T-cell (primary cell): ENCODE measurements at regions of chr19 and their contacts with region 1.

Region 1: DNA sequence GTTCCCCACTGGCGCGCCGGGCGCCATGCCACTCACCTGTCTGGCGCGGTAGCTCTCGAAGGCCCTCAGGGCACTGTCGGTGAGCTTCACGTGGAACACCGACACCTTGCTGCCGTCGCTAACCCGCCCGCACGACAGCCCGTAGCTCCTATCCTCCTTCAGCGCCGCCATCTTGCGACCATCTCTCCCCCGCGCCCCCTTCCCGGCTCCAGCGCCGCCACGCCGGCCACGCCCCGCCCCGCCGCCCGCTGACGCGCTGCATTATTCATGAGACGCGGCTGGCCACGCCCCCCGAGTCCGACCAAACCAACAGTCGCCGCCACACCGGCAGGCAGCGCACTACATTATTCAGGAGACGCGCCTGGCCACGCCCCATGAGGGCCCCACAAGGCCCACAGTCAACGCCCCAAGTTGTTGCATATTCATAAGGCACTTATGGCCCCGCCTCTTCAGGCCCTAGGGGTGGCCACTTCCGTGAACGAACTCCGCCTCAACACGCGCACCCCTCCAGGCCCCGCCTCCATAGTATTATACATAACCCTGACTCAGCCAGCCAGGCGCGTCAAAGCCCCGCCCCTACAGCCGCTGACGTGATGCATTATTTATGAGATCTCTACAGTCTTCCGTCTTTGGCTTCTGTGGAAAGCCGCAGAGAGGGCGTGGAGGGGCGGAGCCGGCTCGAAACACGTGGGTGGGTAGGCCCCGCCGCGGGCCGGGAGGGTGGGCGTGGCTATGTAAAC is at the start of gene ELL:
- DNase-seq: peak; percentile 100
- ATAC-seq: peak; percentile 86 to 89 (median 88)
- H3K4me3 ChIP-seq: peak within 1 kb of the TSS; percentile 65 to 87
- H3K4me3 Mint-ChIP-seq: peak within 1 kb of the TSS; percentile 91 to 99 (median 95)
- H3K27ac ChIP-seq: peak within 1 kb of the TSS; percentile 89
- H3K27ac Mint-ChIP-seq: peak within 1 kb of the TSS; percentile 93 to 96
- H3K4me1 ChIP-seq: peaks cover 6 to 46% of the 10 kb centered on the region in 2 experiments
- H3K4me1 Mint-ChIP-seq: peaks cover 15 to 31% (median 25%) of the 10 kb centered on the region in 3 donors
- H3K27me3 ChIP-seq: no peaks in the 10 kb centered on the region
- H3K27me3 Mint-ChIP-seq: no peaks in the 10 kb centered on the region
- total RNA-seq, gene ELL: 27.2 to 46.4 (median 33.4) TPM

Region 2: DNA sequence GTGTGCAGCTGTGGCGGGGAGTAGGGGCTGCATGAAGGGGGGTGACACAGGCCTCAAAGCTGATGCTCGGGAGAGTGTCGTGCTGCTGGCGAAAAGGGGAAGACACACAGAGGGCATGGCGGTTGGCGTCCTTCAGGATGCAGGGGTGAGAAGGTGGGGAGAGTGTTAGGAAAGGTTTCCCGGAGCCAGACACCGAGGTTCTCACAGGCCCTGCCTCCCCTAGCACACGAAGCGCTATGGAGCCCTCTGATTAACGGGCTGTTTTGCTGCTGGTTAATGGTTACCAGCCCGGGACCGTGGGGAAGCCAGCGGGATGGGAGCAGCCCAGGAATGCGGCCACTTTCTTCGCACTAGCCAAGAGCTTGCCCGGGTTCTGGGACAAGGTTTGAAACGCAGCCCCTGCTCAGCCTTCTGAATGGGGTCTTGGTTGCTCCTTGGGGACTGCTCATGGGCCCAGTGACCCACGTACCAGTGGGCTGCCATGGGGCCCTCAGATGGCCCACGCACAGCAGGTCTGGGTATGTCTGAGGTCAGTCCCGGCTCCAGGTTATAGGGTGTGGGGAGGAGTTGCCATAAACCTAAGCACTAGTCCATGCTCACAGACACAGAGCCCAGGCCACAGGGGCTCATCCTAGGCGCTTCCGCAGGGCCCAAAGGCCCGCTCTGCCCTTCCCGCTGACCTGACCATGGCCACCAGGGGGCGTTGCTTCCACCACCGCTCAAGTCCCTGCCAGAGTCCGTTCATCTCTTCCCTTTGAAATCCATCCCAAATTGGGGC is 52.8 kb before region 1 on chr19:
- CTCF ChIA-PET with region 1: interaction called, 4 to 12 read pairs
- POLR2A ChIA-PET with region 1: no interaction called
- DNase-seq: peak in 30 of 35 experiments; percentile 29 to 80 (median 52)
- ATAC-seq: peak; percentile 52 to 55 (median 53)
- H3K4me3 ChIP-seq: no peak overlapping the region
- H3K4me3 Mint-ChIP-seq: no peak overlapping the region
- H3K27ac ChIP-seq: no peak overlapping the region
- H3K27ac Mint-ChIP-seq: no peak overlapping the region
- H3K4me1 ChIP-seq: peaks cover 0 to 46% of the 10 kb centered on the region in 2 experiments
- H3K4me1 Mint-ChIP-seq: peaks cover 4 to 35% (median 16%) of the 10 kb centered on the region in 3 donors
- H3K27me3 ChIP-seq: no peaks in the 10 kb centered on the region
- H3K27me3 Mint-ChIP-seq: no peaks in the 10 kb centered on the region

Region 3: DNA sequence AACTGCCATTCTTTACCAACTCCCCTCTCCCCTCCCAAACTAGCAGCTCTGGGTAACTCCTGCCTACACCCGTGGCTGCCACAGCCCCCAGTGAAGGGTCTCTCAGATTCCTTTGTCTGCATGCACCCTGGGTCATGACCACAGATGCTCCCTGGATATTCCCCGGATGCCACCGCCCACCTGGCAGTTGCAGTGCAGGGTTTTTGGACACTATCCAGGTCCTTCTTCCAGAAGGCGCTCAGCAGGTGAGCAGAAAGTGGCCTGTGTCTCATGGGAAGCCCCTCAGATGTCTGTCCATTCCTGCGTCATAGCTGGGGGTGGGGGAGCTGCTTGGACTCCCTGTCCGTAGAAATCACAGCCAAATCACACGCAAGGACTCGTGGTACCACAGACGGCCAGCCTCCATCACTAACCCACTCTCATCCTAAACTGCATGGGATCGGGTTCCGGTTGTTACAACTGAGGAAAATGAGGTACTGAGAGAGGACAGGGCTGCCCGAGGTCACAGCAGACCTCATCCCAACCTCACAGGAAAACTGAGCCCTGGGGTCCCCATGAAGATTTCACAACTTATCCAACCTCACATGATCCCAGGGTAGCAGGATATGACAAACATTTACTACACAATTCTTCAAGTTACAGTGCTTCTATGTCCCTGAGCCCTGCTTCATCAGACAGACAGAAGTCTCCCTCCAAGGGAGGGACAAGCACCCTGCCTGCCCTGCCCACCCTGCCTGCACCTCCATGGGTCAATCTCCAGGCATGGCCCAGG is 38.8 kb before region 1 on chr19:
- CTCF ChIA-PET with region 1: no interaction called
- POLR2A ChIA-PET with region 1: no interaction called
- DNase-seq: no peak
- ATAC-seq: no peak
- H3K4me3 ChIP-seq: no peak overlapping the region
- H3K4me3 Mint-ChIP-seq: no peak overlapping the region
- H3K27ac ChIP-seq: no peak overlapping the region
- H3K27ac Mint-ChIP-seq: peak overlapping the region in 1 of 2 donors; percentile 63
- H3K4me1 ChIP-seq: peaks cover 0 to 80% of the 10 kb centered on the region in 2 experiments
- H3K4me1 Mint-ChIP-seq: peaks cover 59 to 95% (median 83%) of the 10 kb centered on the region in 3 donors
- H3K27me3 ChIP-seq: no peaks in the 10 kb centered on the region
- H3K27me3 Mint-ChIP-seq: no peaks in the 10 kb centered on the region

Region 4: GRCh38 chr19:18496167-18496979 is 25.7 kb before region 1 on chr19:
- CTCF ChIA-PET with region 1: interaction called, 7 to 23 read pairs
- POLR2A ChIA-PET with region 1: interaction called in 1 of 2 experiments, 3 read pairs
- DNase-seq: peak in 34 of 35 experiments; percentile 38 to 88 (median 60)
- ATAC-seq: peak; percentile 90 to 95 (median 92)
- H3K4me3 ChIP-seq: peak overlapping the region; percentile 26 to 27
- H3K4me3 Mint-ChIP-seq: peak overlapping the region; percentile 63 to 76 (median 65)
- H3K27ac ChIP-seq: peak overlapping the region; percentile 98
- H3K27ac Mint-ChIP-seq: peak overlapping the region; percentile 71 to 81
- H3K4me1 ChIP-seq: peaks cover 16 to 98% of the 10 kb centered on the region in 2 experiments
- H3K4me1 Mint-ChIP-seq: peaks cover 62 to 88% (median 85%) of the 10 kb centered on the region in 3 donors
- H3K27me3 ChIP-seq: no peaks in the 10 kb centered on the region
- H3K27me3 Mint-ChIP-seq: no peaks in the 10 kb centered on the region

Region 5: DNA sequence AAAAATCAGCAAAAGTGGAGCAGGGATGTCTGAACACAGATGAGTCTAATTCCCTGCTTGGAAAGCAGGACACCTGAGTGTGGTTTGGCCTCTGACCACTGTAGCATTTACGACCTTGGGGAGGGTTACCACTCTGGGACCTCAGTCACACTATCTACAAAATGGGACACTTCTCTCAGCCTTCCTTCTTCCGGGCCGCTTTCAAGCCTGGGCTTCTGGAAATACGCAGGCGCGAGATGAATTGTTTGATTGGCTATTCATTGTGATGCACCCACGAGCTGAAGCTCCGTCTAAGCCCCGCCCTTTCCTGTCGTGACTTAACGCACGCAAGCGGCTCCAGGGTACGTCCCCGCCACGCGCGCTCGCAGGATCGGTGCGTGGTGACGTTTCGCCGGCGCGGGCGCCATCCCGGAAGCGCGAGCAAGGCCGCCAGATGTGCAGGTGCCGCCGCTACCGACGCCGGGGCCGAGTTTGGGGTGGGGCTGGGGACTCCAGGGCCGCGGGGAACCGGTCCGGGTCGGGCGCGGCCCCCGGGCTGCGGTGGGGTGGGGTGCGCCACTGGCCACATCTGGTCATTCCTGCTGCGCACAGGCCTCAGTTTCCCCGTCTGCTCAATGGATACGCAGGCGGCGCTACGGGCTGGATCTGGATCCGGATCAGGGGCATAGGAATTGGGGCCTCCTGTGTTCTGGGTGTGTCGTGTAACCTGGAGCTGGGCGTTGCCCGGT is 35.6 kb after region 1 on chr19 and contains the start of gene KXD1:
- CTCF ChIA-PET with region 1: interaction called in 1 of 2 experiments, 11 read pairs
- POLR2A ChIA-PET with region 1: interaction called, 6 to 8 read pairs
- DNase-seq: peak; percentile 88 to 100 (median 98)
- ATAC-seq: peak; percentile 99 to 100 (median 100)
- H3K4me3 ChIP-seq: peak within 1 kb of the TSS; percentile 80 to 85
- H3K4me3 Mint-ChIP-seq: peak within 1 kb of the TSS; percentile 87 to 90 (median 87)
- H3K27ac ChIP-seq: peak within 1 kb of the TSS; percentile 90
- H3K27ac Mint-ChIP-seq: peak within 1 kb of the TSS; percentile 90 to 92
- H3K4me1 ChIP-seq: peaks cover 14 to 27% of the 10 kb centered on the region in 2 experiments
- H3K4me1 Mint-ChIP-seq: peaks cover 23 to 28% (median 23%) of the 10 kb centered on the region in 3 donors
- H3K27me3 ChIP-seq: no peaks in the 10 kb centered on the region
- H3K27me3 Mint-ChIP-seq: no peaks in the 10 kb centered on the region
- total RNA-seq, gene KXD1: 73.1 to 112 (median 95.8) TPM

Region 6: DNA sequence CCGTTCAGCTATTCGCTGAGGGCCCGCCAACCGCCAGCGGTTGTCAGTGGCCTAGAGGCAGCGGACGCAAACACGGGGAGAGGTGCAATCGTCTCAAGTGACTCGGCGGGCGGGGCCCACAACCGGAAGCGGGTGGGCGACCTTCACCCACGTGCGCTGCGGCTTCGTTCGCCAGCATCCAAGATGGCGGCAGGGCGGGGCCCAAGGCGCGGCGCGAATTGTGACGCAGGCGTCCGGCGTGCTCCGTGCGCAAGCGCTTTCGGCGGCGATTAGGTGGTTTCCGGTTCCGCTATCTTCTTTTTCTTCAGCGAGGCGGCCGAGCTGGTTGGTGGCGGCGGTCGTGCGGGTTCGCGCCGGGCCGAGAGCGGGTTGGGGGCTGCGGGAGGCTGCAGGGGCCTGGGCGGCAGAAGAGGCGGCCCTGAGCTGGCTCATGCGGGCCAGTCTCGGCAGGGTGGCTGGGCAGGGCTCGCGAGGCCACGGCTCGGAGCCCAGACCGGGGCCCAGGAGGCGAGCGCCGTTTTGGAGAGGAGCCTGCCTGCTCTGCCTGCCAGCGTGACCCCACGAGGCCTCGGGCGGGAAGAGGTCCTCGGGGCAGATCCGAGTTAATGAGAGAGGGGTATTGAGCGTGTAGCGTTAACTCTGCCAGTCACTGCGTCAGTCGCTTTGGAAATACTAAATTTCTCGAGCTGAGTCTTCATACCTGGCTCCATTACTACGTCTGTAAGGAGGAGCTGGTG is 49.7 kb after region 1 on chr19 and contains the start of gene UBA52:
- CTCF ChIA-PET with region 1: interaction called in 1 of 2 experiments, 12 read pairs
- POLR2A ChIA-PET with region 1: interaction called in 1 of 2 experiments, 21 read pairs
- DNase-seq: peak; percentile 95 to 100 (median 98)
- ATAC-seq: peak; percentile 94 to 96 (median 95)
- H3K4me3 ChIP-seq: peak within 1 kb of the TSS; percentile 90 to 96
- H3K4me3 Mint-ChIP-seq: peak within 1 kb of the TSS; percentile 85 to 94 (median 93)
- H3K27ac ChIP-seq: peak within 1 kb of the TSS; percentile 86
- H3K27ac Mint-ChIP-seq: peak within 1 kb of the TSS; percentile 92 to 94
- H3K4me1 ChIP-seq: peaks cover 11 to 27% of the 10 kb centered on the region in 2 experiments
- H3K4me1 Mint-ChIP-seq: peaks cover 20 to 23% (median 23%) of the 10 kb centered on the region in 3 donors
- H3K27me3 ChIP-seq: no peaks in the 10 kb centered on the region
- H3K27me3 Mint-ChIP-seq: no peaks in the 10 kb centered on the region
- total RNA-seq, gene UBA52: 1,917 to 2,053 (median 1,972) TPM

Region 7: GRCh38 chr19:18588611-18589379 is 66.7 kb after region 1 on chr19 and contains the start of gene REX1BD:
- CTCF ChIA-PET with region 1: interaction called, 3 to 16 read pairs
- POLR2A ChIA-PET with region 1: interaction called in 1 of 2 experiments, 3 read pairs
- DNase-seq: peak; percentile 73 to 91 (median 86)
- ATAC-seq: peak; percentile 81 to 85 (median 82)
- H3K4me3 ChIP-seq: peak within 1 kb of the TSS; percentile 77 to 78
- H3K4me3 Mint-ChIP-seq: peak within 1 kb of the TSS; percentile 79 to 88 (median 80)
- H3K27ac ChIP-seq: peak within 1 kb of the TSS; percentile 93
- H3K27ac Mint-ChIP-seq: peak within 1 kb of the TSS; percentile 93 to 95
- H3K4me1 ChIP-seq: peaks cover 16 to 46% of the 10 kb centered on the region in 2 experiments
- H3K4me1 Mint-ChIP-seq: peaks cover 35 to 46% (median 37%) of the 10 kb centered on the region in 3 donors
- H3K27me3 ChIP-seq: no peaks in the 10 kb centered on the region
- H3K27me3 Mint-ChIP-seq: no peaks in the 10 kb centered on the region
- total RNA-seq, gene REX1BD: 91.8 to 166 (median 150) TPM

Region 8: GRCh38 chr19:18594096-18594823 is 72.2 kb after region 1 on chr19:
- CTCF ChIA-PET with region 1: interaction called, 13 to 16 read pairs
- POLR2A ChIA-PET with region 1: no interaction called
- DNase-seq: peak; percentile 51 to 88 (median 70)
- ATAC-seq: peak; percentile 74 to 84 (median 77)
- H3K4me3 ChIP-seq: peak overlapping the region; percentile 47 to 51
- H3K4me3 Mint-ChIP-seq: peak overlapping the region; percentile 64 to 76 (median 65)
- H3K27ac ChIP-seq: no peak overlapping the region
- H3K27ac Mint-ChIP-seq: peak overlapping the region in 1 of 2 donors; percentile 74
- H3K4me1 ChIP-seq: peaks cover 11 to 46% of the 10 kb centered on the region in 2 experiments
- H3K4me1 Mint-ChIP-seq: peaks cover 25 to 33% (median 28%) of the 10 kb centered on the region in 3 donors
- H3K27me3 ChIP-seq: peaks cover 0 to 27% of the 10 kb centered on the region in 2 experiments
- H3K27me3 Mint-ChIP-seq: peaks cover 3 to 9% of the 10 kb centered on the region in 2 donors